Heart right ventricle (tissue), 16 donors: ENCODE measurements at regions of chr2 and their contacts with region 1.

Region 1: DNA sequence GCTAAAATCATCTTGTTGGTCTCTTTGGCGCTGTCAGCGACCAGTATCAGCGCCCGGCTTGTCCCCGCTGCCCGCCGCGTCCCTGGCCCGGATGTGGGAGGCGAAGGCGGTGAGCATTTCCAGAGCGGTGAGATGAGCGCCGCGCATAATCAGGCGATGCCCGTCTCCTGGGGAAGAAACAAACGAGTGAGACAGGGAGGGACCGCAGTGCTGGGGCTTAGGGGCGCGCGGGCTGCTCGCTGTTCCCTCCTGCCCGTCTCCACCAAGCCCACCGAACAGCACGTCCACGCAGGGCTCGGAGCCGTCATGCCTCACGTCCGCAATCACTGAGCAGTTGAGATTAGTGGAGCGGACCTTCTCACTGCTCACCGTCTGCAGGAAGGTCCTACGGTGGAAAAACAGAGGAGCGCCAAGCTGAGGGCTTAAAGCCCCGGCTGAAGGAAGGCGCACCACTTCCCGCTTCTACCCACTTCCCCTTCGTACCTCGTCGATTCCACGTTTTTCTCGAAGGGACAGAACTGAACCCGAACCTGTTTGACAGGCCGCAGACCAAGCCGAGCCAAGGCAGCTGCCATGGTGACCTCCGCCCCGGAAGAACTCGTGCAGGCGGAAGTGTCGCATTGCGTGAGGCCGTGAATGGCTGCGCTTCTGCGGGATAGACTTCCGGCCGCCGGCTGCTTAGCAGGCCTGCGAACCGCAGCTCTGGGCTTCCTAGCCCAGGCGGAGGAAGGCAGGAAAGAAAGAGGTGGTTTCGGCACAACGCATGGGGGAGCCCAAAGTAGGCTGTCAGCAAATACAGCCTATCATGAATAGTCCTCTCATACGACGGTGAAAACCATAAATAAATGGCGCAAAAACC is at the start of gene MRPL53:
- DNase-seq: peak; percentile 96
- ATAC-seq: peak; percentile 91 to 98 (median 97)
- H3K4me3 ChIP-seq: peak within 1 kb of the TSS; percentile 46 to 87 (median 80)
- H3K27ac ChIP-seq: peak within 1 kb of the TSS; percentile 50 to 95 (median 88)
- H3K4me1 ChIP-seq: peaks cover 5 to 36% (median 25%) of the 10 kb centered on the region in 9 donors
- H3K27me3 ChIP-seq: no peaks in the 10 kb centered on the region
- CTCF ChIP-seq: no peak
- total RNA-seq, gene MRPL53: 136 to 188 (median 150) TPM

Region 2: DNA sequence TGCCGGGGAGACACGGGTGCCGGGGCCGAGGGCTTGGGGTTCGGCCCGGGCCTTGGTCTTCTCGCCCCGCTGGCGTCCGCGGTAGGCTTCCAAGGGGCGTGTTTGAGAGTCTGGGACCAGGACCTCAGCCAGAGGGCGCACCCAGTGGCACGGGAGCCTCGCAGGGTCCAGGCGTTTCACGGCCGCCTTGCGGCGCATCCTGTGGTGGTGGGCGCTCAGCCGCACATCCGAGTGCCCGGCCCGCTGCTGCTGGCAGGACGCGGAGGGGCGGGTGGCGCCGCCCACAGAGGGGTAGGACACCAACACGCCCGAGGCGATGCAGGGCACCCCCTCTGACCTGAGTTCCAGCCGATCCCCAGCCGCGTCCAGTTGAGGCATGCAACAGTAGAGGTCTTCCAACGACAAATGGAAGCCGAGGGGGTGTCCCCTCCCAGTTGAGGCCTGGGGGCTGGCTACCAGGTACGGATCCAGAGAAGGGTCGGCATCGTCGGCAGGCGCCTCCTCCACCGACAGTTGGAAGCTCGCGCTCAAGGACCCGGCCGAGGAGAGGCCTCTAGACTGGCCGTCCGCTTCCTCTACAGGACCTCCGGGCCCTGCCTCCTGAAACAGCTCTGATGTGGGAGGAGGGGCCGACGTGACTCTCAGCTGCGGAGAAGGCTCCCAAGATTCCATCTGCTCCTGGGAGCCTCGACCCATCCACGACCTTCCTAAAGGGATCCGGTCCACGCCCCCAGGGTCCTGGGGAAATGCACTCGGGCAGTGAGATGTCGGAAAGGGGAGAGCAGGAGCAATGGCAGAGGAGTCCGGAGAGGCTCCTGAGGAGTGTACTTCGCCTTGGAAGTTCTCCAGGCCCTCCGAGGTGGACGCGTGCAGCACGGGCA is 57.2 kb before region 1 on chr2:
- intact Hi-C with region 1: loop called in 1 of 10 experiments (anchors 5 kb)
- DNase-seq: peak; percentile 64 to 68
- ATAC-seq: peak; percentile 75 to 86 (median 80)
- H3K4me3 ChIP-seq: peak overlapping the region; percentile 39 to 72 (median 65)
- H3K27ac ChIP-seq: peak overlapping the region; percentile 24 to 74 (median 62)
- H3K4me1 ChIP-seq: peaks cover 8 to 49% (median 41%) of the 10 kb centered on the region in 9 donors
- H3K27me3 ChIP-seq: peaks cover 0 to 28% (median 0%) of the 10 kb centered on the region in 7 donors
- CTCF ChIP-seq: peak; percentile 12 to 73 (median 47)